ENCODE measurements at regions of chr17 and their contacts with region 1.

Region 1: GRCh38 chr17:30477083-30477773 is at the start of gene GOSR1:
- DNase-seq: peak; percentile 90
- ATAC-seq: peak; percentile 98
- H3K4me3 ChIP-seq: peak within 1 kb of the TSS; percentile 82 to 95 (median 85)
- H3K27ac ChIP-seq: peak within 1 kb of the TSS; percentile 87
- H3K4me1 ChIP-seq: peaks cover 28% of the 10 kb centered on the region
- H3K27me3 ChIP-seq: no peaks in the 10 kb centered on the region; a peak in 1 of 5 replicates
- CTCF ChIP-seq: peak; percentile 97
- EP300 ChIP-seq: no peak
- POLR2A ChIP-seq: peak; percentile 94
- RAD21 ChIP-seq: 0 out of 2 replicates have a peak, but pooled peaks have one; percentile 52
- total RNA-seq, gene GOSR1: 37.0 and 44.6 TPM in 2 replicates

Region 2: GRCh38 chr17:30519707-30520106 is 42.5 kb after region 1 on chr17:
- CTCF ChIA-PET with region 1: no interaction called
- POLR2A ChIA-PET with region 1: no interaction called
- in situ Hi-C with region 1: no loop called
- intact Hi-C with region 1: no loop called
- DNase-seq: no peak
- ATAC-seq: no peak
- H3K4me3 ChIP-seq: no peak overlapping the region
- H3K27ac ChIP-seq: no peak overlapping the region
- H3K4me1 ChIP-seq: no peaks in the 10 kb centered on the region
- H3K27me3 ChIP-seq: no peaks in the 10 kb centered on the region
- CTCF ChIP-seq: no peak
- EP300 ChIP-seq: no peak
- POLR2A ChIP-seq: no peak
- RAD21 ChIP-seq: no peak

Region 3: DNA sequence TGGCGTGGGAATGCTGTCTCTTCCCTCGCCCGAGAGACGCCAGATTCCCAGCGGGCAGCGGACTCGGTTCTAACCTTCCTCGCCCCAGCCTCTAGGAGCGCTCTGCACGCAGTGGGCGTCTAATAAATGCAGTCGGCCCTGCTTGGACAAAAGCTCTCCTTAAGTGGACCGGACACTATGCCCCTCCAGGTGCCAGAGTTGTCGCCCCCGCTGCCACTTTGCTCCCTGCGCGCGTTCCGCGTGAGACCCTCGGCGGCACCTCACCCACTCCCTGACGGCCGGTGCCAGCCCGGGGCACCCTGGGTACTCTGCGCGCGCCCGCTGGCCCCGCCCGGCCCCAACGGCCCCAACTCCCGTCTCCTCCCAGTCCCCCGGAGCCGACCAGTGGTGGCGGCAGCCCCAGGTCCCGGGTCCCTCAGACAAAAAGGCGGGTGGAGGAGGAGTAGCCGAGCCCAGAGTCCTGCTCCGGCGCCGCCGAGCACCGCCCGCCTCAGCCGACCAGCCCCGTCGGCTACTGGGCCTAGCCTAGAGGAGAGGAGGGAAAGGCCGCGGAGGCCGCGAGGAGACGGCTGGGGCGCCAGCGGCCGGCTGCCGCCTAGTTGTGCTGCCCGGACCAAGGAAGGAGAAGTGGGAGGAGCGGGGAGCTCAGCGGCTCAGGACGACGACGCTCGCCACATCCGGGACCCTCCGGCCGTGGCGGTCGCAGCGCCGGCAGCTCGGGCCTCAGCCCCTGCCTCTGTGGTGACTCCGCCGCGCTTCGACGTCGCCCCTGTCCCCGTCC is 123.0 kb after region 1 on chr17:
- CTCF ChIA-PET with region 1: no interaction called
- POLR2A ChIA-PET with region 1: interaction called, 10 read pairs
- in situ Hi-C with region 1: no loop called
- intact Hi-C with region 1: no loop called
- DNase-seq: peak; percentile 64
- ATAC-seq: peak; percentile 95
- H3K4me3 ChIP-seq: peak overlapping the region; percentile 87 to 96 (median 94)
- H3K27ac ChIP-seq: peak overlapping the region; percentile 91
- H3K4me1 ChIP-seq: peaks cover 48% of the 10 kb centered on the region
- H3K27me3 ChIP-seq: no peaks in the 10 kb centered on the region; a peak in 1 of 5 replicates
- CTCF ChIP-seq: peak; percentile 61
- EP300 ChIP-seq: no peak
- POLR2A ChIP-seq: peak in 1 of 2 experiments; percentile 62; a peak in 2 of 4 replicates
- RAD21 ChIP-seq: peak; percentile 52